Common myeloid progenitor, CD34-positive (primary cell): ENCODE measurements at regions of chr1 and their contacts with region 1.

Region 1: DNA sequence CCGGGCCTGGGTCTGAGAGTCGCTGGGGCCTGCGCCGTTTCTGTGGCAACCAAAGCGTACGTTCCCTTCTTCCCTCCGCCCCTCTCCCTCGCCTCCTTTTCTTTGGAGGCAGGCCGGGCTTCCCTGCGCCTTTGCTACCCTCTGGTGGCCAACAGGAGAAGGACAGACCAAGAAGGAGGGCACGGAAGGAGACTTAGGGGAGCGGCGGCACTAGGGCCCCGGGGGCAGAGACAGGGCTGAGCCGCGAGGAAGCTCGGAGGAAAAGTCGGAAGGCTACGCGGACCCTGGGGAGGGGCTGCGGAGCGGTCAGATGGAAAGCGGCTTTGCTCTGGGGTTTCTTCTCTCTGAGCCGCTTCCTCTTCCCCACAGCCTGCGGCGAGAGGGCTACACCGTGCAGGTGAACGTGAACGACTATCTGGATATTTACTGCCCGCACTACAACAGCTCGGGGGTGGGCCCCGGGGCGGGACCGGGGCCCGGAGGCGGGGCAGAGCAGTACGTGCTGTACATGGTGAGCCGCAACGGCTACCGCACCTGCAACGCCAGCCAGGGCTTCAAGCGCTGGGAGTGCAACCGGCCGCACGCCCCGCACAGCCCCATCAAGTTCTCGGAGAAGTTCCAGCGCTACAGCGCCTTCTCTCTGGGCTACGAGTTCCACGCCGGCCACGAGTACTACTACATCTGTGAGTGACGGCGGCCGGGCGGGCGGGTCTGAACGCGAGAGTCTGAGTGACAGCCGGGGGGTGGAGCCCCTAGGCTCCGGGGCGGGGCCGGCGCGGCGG is 6.3 kb downstream of the EFNA3 start:
- DNase-seq: peak; percentile 94 to 96 (median 96)
- H3K4me3 ChIP-seq: peak overlapping the region; percentile 72 to 92 (median 83)
- H3K27ac ChIP-seq: peak overlapping the region; percentile 46 to 71
- H3K4me1 ChIP-seq: peaks cover 3 to 67% (median 62%) of the 10 kb centered on the region in 4 experiments
- H3K27me3 ChIP-seq: peaks cover 0 to 42% (median 27%) of the 10 kb centered on the region in 5 experiments

Region 2: GRCh38 chr1:154951901-154952662 is 132.8 kb before region 1 on chr1:
- CTCF ChIA-PET with region 1: no interaction called
- POLR2A ChIA-PET with region 1: no interaction called
- DNase-seq: peak; percentile 32 to 70 (median 66)
- H3K4me3 ChIP-seq: peak overlapping the region in 6 of 7 experiments; percentile 26 to 92 (median 82)
- H3K27ac ChIP-seq: peak overlapping the region; percentile 100
- H3K4me1 ChIP-seq: peaks cover 22 to 69% (median 58%) of the 10 kb centered on the region in 4 experiments
- H3K27me3 ChIP-seq: no peaks in the 10 kb centered on the region

Region 3: GRCh38 chr1:155050560-155051341 is 34.2 kb before region 1 on chr1 and contains the start of gene ADAM15:
- CTCF ChIA-PET with region 1: interaction called, 168 read pairs
- POLR2A ChIA-PET with region 1: no interaction called
- DNase-seq: peak; percentile 55 to 81 (median 72)
- H3K4me3 ChIP-seq: peak within 1 kb of the TSS; percentile 45 to 88 (median 79)
- H3K27ac ChIP-seq: peak within 1 kb of the TSS; percentile 8 to 43
- H3K4me1 ChIP-seq: peaks cover 3 to 43% (median 40%) of the 10 kb centered on the region in 4 experiments
- H3K27me3 ChIP-seq: no peaks in the 10 kb centered on the region

Region 4: GRCh38 chr1:155070721-155071569 is 14.0 kb before region 1 on chr1:
- CTCF ChIA-PET with region 1: interaction called, 168 read pairs
- POLR2A ChIA-PET with region 1: no interaction called
- DNase-seq: peak; percentile 91 to 95 (median 94)
- H3K4me3 ChIP-seq: peak overlapping the region in 6 of 7 experiments; percentile 28 to 75 (median 44)
- H3K27ac ChIP-seq: peak overlapping the region in 1 of 2 experiments; percentile 43
- H3K4me1 ChIP-seq: peaks cover 0 to 36% (median 26%) of the 10 kb centered on the region in 4 experiments
- H3K27me3 ChIP-seq: no peaks in the 10 kb centered on the region

Region 5: GRCh38 chr1:155167166-155168104 is 82.5 kb after region 1 on chr1:
- CTCF ChIA-PET with region 1: interaction called, 258 read pairs
- POLR2A ChIA-PET with region 1: interaction called, 5 read pairs
- DNase-seq: peak; percentile 87 to 91 (median 91)
- H3K4me3 ChIP-seq: peak overlapping the region in 6 of 7 experiments; percentile 29 to 69 (median 43)
- H3K27ac ChIP-seq: peak overlapping the region in 1 of 2 experiments; percentile 22
- H3K4me1 ChIP-seq: peaks cover 0 to 33% (median 28%) of the 10 kb centered on the region in 4 experiments
- H3K27me3 ChIP-seq: no peaks in the 10 kb centered on the region